BJ (cell line): ENCODE measurements at regions of chr10 and their contacts with region 1.

Region 1: GRCh38 chr10:75187961-75188426 is 22.6 kb upstream of the VDAC2 start:
- DNase-seq: no peak
- H3K4me3 ChIP-seq: no peak overlapping the region
- H3K27me3 ChIP-seq: no peaks in the 10 kb centered on the region
- CTCF ChIP-seq: peak; percentile 84

Region 2: DNA sequence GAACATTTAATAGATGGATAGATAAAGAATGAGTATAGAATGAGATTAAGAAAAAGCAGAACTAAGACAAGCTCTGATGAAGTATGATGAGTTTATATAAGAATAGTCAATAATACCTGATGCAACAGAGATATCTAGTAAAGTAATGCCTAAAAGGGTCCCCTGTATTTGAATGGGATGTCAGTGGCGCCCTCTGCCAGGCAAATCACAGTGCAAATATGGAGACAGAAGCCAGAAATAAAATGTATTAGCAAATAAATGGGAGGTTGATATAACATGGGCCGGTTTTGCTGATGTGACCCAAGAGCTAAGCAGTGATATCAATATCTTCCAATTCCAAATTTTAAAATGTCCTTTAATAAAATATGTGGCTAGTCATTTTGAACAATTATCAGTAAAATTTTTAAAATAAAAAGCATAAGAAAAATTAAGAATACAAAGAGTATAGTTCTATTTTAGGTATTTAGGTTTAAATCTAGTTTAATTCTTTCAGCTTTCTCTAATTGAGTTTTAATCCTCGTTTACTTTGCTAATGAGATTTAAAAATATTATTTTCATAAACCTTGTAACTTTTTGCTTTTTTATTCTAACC is 974.3 kb before region 1 on chr10:
- CTCF ChIA-PET with region 1: no interaction called
- POLR2A ChIA-PET with region 1: no interaction called
- DNase-seq: no peak
- H3K4me3 ChIP-seq: no peak overlapping the region
- H3K27me3 ChIP-seq: no peaks in the 10 kb centered on the region
- CTCF ChIP-seq: peak; percentile 63

Region 3: GRCh38 chr10:75170215-75170614 is 17.8 kb before region 1 on chr10:
- CTCF ChIA-PET with region 1: interaction called, 3 read pairs
- POLR2A ChIA-PET with region 1: interaction called, 10 read pairs
- DNase-seq: no peak
- H3K4me3 ChIP-seq: no peak overlapping the region
- H3K27me3 ChIP-seq: no peaks in the 10 kb centered on the region
- CTCF ChIP-seq: no peak